IMR-90 (cell line): ENCODE measurements at regions of chr13 and their contacts with region 1.

Region 1: DNA sequence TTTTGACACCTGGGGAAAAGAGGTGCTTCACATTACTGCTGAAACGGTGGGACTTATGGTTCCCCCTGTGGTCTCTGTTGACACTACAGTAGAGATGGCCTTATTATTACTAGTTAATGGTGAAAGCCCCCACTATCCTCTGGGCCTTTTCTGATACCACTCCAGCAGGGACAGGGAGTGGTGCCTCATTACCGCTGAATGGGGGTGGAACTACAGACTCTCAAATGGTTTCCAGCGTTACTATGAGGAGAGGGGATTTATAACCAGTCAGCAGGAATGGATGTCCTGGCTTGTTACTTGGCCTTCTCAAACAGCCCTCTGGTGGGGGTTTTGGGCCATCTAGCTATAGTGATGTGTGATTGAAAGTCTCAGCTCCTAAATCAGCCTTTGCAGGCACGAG is 96.7 kb upstream of the DIAPH3 start:
- DNase-seq: no peak
- ATAC-seq: no peak
- H3K4me3 ChIP-seq: no peak overlapping the region
- H3K27ac ChIP-seq: no peak overlapping the region
- H3K4me1 ChIP-seq: no peaks in the 10 kb centered on the region
- H3K27me3 ChIP-seq: no peaks in the 10 kb centered on the region; the same call in 1 of the 2 replicates
- CTCF ChIP-seq: no peak
- POLR2A ChIP-seq: no peak
- RAD21 ChIP-seq: no peak

Region 2: GRCh38 chr13:60242043-60242595 is 18.3 kb before region 1 on chr13:
- CTCF ChIA-PET with region 1: no interaction called
- POLR2A ChIA-PET with region 1: no interaction called
- dilution Hi-C with region 1: no loop called
- in situ Hi-C with region 1: no loop called
- intact Hi-C with region 1: loop called (anchors 2 kb)
- DNase-seq: no peak
- ATAC-seq: no peak
- H3K4me3 ChIP-seq: no peak overlapping the region
- H3K27ac ChIP-seq: no peak overlapping the region
- H3K4me1 ChIP-seq: no peaks in the 10 kb centered on the region
- H3K27me3 ChIP-seq: no peaks in the 10 kb centered on the region; the same call in 1 of the 2 replicates
- CTCF ChIP-seq: no peak
- POLR2A ChIP-seq: no peak
- RAD21 ChIP-seq: no peak